ENCODE measurements at regions of chr4 and their contacts with region 1.

Region 1: GRCh38 chr4:175109933-175110332 is 191.8 kb downstream of the ADAM29 start:
- DNase-seq: no peak
- CTCF ChIP-seq: peak; percentile 54

Region 2: GRCh38 chr4:174352061-174352819 is 757.7 kb before region 1 on chr4:
- in situ Hi-C with region 1: no loop called
- DNase-seq: no peak
- CTCF ChIP-seq: no peak

Region 3: DNA sequence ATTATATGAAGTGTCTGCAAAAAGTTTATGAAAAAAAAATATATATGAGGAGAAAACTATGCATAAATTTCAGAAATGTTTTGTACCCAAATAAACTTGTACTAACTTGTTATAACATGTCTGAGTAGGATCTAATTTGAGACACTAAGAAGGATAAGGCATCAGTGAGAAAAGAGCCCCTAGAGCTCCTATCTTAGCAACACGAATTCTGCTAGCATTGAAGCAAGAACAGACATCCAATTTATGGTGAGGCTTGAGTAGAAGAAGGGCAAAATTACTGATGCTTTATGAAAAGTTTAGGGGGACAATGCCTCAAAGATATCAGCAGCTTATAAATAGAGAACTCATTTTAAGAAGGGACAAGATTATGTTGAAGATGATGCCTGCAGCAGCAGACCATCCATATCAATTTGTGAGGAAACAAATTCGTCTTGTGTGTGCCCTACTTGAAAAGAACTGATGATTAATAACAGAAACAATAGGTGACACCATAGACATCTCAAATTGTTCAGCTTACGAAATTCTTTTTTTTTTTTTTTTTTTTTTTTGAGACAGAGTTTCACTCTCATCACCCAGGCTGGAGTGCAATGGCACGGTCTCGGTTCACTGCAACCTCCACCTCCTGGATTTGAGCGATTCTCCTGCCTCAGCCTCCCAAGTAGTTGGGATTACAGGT is 227.5 kb before region 1 on chr4:
- in situ Hi-C with region 1: loop called (anchors 25 kb)
- DNase-seq: no peak
- CTCF ChIP-seq: no peak

Measured in GM13977 (cell line).